A549 (cell line): ENCODE measurements at regions of chr20 and their contacts with region 1.

Region 1: DNA sequence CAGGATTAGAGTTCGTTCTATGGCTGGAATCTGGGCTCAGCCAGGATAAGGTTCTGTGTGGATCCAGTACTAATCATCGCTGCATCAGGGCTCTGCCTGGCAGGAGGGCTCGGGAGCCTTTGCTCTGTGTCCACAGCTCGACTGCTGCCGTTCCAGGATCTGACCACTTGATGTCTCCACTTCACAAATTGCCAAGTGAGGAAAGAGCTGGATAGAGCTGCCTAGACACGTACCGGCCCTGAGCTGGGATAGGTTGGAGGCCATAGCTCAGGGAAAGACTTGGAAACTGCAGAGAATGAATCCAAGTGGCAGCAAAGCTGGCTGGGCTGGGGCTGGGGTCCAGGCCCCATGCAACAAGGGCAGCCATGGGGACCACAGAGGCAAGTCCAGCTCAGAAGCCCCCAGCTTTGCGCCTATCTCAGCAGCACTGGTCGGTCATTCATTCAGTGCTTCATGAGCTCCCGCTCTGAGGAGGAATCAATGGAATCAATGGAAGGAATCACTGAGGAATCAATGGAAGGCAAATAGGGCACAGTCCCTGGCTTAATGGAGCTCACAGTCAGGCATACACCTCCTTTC is 38.0 kb upstream of the TOP1 start:
- DNase-seq: peak; percentile 85 to 91
- ATAC-seq: peak; percentile 99 to 100
- H3K4me3 ChIP-seq: no peak overlapping the region
- H3K27ac ChIP-seq: peak overlapping the region; percentile 62 to 84; a peak in 5 of 6 replicates
- H3K4me1 ChIP-seq: no peaks in the 10 kb centered on the region
- CTCF ChIP-seq: peak; percentile 85
- EP300 ChIP-seq: no peak
- POLR2A ChIP-seq: no peak
- RAD21 ChIP-seq: peak; percentile 88 to 89

Region 2: GRCh38 chr20:40962730-40963504 is 27.7 kb before region 1 on chr20:
- CTCF ChIA-PET with region 1: interaction called, 191 read pairs
- POLR2A ChIA-PET with region 1: no interaction called
- DNase-seq: peak; percentile 63 to 82
- ATAC-seq: peak; percentile 87 to 96
- H3K4me3 ChIP-seq: no peak overlapping the region
- H3K27ac ChIP-seq: no peak overlapping the region
- H3K4me1 ChIP-seq: no peaks in the 10 kb centered on the region
- CTCF ChIP-seq: peak; percentile 85
- EP300 ChIP-seq: no peak
- POLR2A ChIP-seq: no peak
- RAD21 ChIP-seq: peak; percentile 83 to 87

Region 3: DNA sequence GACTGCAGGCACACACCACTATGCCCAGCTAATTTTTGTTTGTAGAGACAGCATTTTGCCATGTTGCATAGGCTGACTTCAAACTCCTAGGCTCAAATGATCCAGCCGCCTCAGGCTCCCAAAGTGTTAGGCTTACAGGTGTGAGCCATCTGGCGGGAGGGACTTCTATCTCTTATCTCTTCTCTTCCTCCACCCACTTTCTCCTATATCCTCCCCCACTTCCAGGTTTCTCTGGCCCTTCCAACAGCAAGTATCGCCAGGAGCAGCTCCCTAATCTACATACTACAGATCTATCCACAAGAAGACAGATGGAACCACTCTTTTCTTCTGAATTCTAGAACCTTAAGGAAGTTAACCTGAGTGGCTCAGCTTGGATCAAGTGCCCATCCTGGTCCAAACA is 32.9 kb after region 1 on chr20:
- CTCF ChIA-PET with region 1: interaction called, 28 read pairs
- POLR2A ChIA-PET with region 1: interaction called, 5 read pairs
- DNase-seq: no peak
- ATAC-seq: no peak
- H3K4me3 ChIP-seq: no peak overlapping the region
- H3K27ac ChIP-seq: no peak overlapping the region
- H3K4me1 ChIP-seq: peaks cover 6% of the 10 kb centered on the region; the same call in 2 of the 3 replicates
- CTCF ChIP-seq: no peak
- EP300 ChIP-seq: no peak
- POLR2A ChIP-seq: no peak
- RAD21 ChIP-seq: no peak

Region 4: GRCh38 chr20:41040855-41041254 is 50.2 kb after region 1 on chr20:
- CTCF ChIA-PET with region 1: interaction called, 22 read pairs
- POLR2A ChIA-PET with region 1: no interaction called
- DNase-seq: no peak
- ATAC-seq: no peak
- H3K4me3 ChIP-seq: no peak overlapping the region
- H3K27ac ChIP-seq: no peak overlapping the region
- H3K4me1 ChIP-seq: peaks cover 22% of the 10 kb centered on the region; the same call in 2 of the 3 replicates
- CTCF ChIP-seq: no peak
- EP300 ChIP-seq: no peak
- POLR2A ChIP-seq: no peak
- RAD21 ChIP-seq: no peak

Region 5: GRCh38 chr20:41078329-41078728 is 87.7 kb after region 1 on chr20:
- CTCF ChIA-PET with region 1: interaction called, 29 read pairs
- POLR2A ChIA-PET with region 1: no interaction called
- DNase-seq: peak; percentile 15 to 38
- ATAC-seq: peak; percentile 82 to 86
- H3K4me3 ChIP-seq: no peak overlapping the region
- H3K27ac ChIP-seq: no peak overlapping the region
- H3K4me1 ChIP-seq: peaks cover 19% of the 10 kb centered on the region; the same call in 2 of the 3 replicates
- CTCF ChIP-seq: peak; percentile 53
- EP300 ChIP-seq: no peak
- POLR2A ChIP-seq: no peak
- RAD21 ChIP-seq: peak; percentile 56 to 62

Region 6: GRCh38 chr20:41339507-41340326 is 349.1 kb after region 1 on chr20:
- CTCF ChIA-PET with region 1: interaction called, 10 read pairs
- POLR2A ChIA-PET with region 1: no interaction called
- DNase-seq: peak; percentile 77
- ATAC-seq: peak; percentile 79 to 88
- H3K4me3 ChIP-seq: peak overlapping the region; percentile 66
- H3K27ac ChIP-seq: peak overlapping the region; percentile 45 to 94; a peak in 5 of 6 replicates
- H3K4me1 ChIP-seq: peaks cover 11% of the 10 kb centered on the region; the same call in 2 of the 3 replicates
- CTCF ChIP-seq: peak; percentile 95
- EP300 ChIP-seq: no peak
- POLR2A ChIP-seq: no peak
- RAD21 ChIP-seq: peak; percentile 97 to 99